Naive thymus-derived CD4-positive, alpha-beta T cell (primary cell): ENCODE measurements at regions of chr3 and their contacts with region 1.

Region 1: DNA sequence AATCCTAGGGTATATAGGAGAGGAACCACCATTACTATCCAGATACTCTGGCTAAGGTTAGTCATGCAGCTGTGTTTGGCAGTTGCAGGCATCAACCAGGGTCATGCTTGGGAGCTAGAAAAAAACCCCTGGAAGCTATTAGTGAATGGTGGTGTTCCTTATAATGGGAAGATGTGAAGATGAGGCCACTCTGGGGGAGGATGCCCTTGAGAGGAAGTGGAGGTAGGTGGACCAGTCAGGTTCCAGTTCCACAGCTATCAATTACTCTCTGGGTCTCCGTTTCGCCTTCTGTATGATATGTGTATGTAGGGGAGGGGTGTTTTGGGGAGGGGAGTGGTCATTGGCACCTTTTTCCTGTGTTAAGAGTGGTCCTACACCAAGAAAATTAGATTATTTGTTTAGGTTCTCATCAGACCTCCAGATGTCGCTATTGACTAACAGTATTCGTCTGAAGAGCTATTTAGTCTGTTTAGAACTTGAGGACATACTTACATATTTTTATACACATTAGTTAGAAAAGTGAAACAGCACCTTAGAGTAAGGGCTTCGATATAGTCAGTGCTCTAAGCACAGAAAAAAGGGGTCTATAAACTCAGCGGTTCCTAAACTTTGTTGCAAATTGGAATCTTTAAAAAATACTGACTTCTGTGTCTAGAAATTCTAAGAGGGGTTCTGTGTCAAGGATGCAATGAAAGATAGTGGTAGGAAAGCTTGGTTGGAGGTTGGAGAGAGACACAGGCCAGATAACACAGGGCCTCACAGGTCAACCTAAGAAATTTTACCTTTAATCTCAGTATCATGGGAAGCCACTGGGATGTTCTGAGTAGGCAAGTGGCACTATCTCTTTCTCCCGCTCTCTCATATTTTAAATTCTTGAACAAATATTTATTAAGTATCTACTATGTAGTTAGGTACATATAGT is 9.1 kb upstream of the HPS3 start:
- DNase-seq: peak in 7 of 9 donors; percentile 37 to 60 (median 49)
- ATAC-seq: peak; percentile 90
- H3K4me3 ChIP-seq: no peak overlapping the region
- H3K4me3 Mint-ChIP-seq: no peak overlapping the region
- H3K27ac ChIP-seq: no peak overlapping the region
- H3K27ac Mint-ChIP-seq: peak overlapping the region in 2 of 9 donors; percentile 3 to 74
- H3K4me1 ChIP-seq: no peaks in the 10 kb centered on the region
- H3K4me1 Mint-ChIP-seq: peaks cover 0 to 7% (median 0%) of the 10 kb centered on the region in 7 donors
- H3K27me3 ChIP-seq: no peaks in the 10 kb centered on the region
- H3K27me3 Mint-ChIP-seq: peaks cover 0 to 12% (median 8%) of the 10 kb centered on the region in 5 donors

Region 2: GRCh38 chr3:148809835-148810234 is 310.5 kb before region 1 on chr3:
- CTCF ChIA-PET with region 1: no interaction called
- POLR2A ChIA-PET with region 1: no interaction called
- intact Hi-C with region 1: no loop called
- DNase-seq: no peak
- ATAC-seq: no peak
- H3K4me3 ChIP-seq: no peak overlapping the region
- H3K4me3 Mint-ChIP-seq: no peak overlapping the region
- H3K27ac ChIP-seq: no peak overlapping the region
- H3K27ac Mint-ChIP-seq: no peak overlapping the region
- H3K4me1 ChIP-seq: no peaks in the 10 kb centered on the region
- H3K4me1 Mint-ChIP-seq: no peaks in the 10 kb centered on the region
- H3K27me3 ChIP-seq: no peaks in the 10 kb centered on the region
- H3K27me3 Mint-ChIP-seq: peaks cover 0 to 26% (median 5%) of the 10 kb centered on the region in 5 donors

Region 3: GRCh38 chr3:148861277-148861869 is 258.9 kb before region 1 on chr3:
- CTCF ChIA-PET with region 1: no interaction called
- POLR2A ChIA-PET with region 1: no interaction called
- intact Hi-C with region 1: loop called in 1 of 2 experiments (anchors 2 kb)
- DNase-seq: peak in 5 of 9 donors; percentile 4 to 35 (median 14)
- ATAC-seq: peak; percentile 72
- H3K4me3 ChIP-seq: no peak overlapping the region
- H3K4me3 Mint-ChIP-seq: no peak overlapping the region
- H3K27ac ChIP-seq: no peak overlapping the region
- H3K27ac Mint-ChIP-seq: no peak overlapping the region
- H3K4me1 ChIP-seq: no peaks in the 10 kb centered on the region
- H3K4me1 Mint-ChIP-seq: no peaks in the 10 kb centered on the region
- H3K27me3 ChIP-seq: peaks cover 0 to 3% of the 10 kb centered on the region in 2 donors
- H3K27me3 Mint-ChIP-seq: peaks cover 4 to 22% (median 13%) of the 10 kb centered on the region in 5 donors

Region 4: DNA sequence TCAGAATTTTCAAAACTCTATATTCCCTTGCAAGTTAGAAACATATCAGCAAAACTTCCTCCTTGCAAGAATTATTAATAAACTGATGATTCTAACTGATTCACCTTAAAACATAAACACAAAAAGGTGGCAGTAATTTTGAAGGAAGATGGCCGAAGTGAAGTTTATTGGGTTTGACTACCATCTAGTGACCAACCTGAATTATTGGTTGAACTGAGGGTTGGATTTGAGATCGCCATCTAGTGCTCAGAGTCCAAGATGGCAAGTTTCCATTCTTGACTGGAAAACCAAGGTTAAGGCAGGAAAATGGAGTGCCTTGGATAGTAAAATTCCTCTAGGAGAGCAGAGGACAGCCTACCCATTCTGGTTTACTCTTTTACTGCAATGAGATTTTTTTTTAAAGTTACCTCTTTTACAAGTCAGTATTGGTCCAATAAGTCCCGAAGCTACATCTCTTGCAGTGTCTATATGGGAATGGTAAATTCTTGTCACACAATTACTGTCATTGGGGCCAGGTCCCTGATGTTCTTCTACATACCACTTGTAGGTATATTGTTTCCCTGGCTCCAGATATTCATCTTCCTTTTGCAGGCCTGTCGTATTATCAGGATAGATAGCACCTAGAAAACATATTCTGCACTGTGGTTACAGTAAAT is 152.9 kb after region 1 on chr3:
- CTCF ChIA-PET with region 1: interaction called, 77 read pairs
- POLR2A ChIA-PET with region 1: interaction called, 4 read pairs
- intact Hi-C with region 1: loop called (anchors 1 kb)
- DNase-seq: peak in 7 of 9 donors; percentile 19 to 67 (median 52)
- ATAC-seq: peak; percentile 92
- H3K4me3 ChIP-seq: no peak overlapping the region
- H3K4me3 Mint-ChIP-seq: no peak overlapping the region
- H3K27ac ChIP-seq: no peak overlapping the region
- H3K27ac Mint-ChIP-seq: no peak overlapping the region
- H3K4me1 ChIP-seq: peaks cover 4 to 13% of the 10 kb centered on the region in 2 donors
- H3K4me1 Mint-ChIP-seq: peaks cover 6 to 14% (median 13%) of the 10 kb centered on the region in 7 donors
- H3K27me3 ChIP-seq: no peaks in the 10 kb centered on the region
- H3K27me3 Mint-ChIP-seq: peaks cover 0 to 15% (median 0%) of the 10 kb centered on the region in 5 donors

Region 5: GRCh38 chr3:149352556-149352955 is 232.2 kb after region 1 on chr3:
- CTCF ChIA-PET with region 1: no interaction called
- POLR2A ChIA-PET with region 1: no interaction called
- intact Hi-C with region 1: loop called in 1 of 2 experiments (anchors 5 kb)
- DNase-seq: peak in 3 of 9 donors; percentile 3 to 28 (median 4)
- ATAC-seq: peak; percentile 83
- H3K4me3 ChIP-seq: no peak overlapping the region
- H3K4me3 Mint-ChIP-seq: no peak overlapping the region
- H3K27ac ChIP-seq: no peak overlapping the region
- H3K27ac Mint-ChIP-seq: no peak overlapping the region
- H3K4me1 ChIP-seq: no peaks in the 10 kb centered on the region
- H3K4me1 Mint-ChIP-seq: no peaks in the 10 kb centered on the region
- H3K27me3 ChIP-seq: no peaks in the 10 kb centered on the region
- H3K27me3 Mint-ChIP-seq: peaks cover 22 to 33% (median 29%) of the 10 kb centered on the region in 5 donors

Region 6: GRCh38 chr3:149717391-149718056 is 597.2 kb after region 1 on chr3:
- CTCF ChIA-PET with region 1: interaction called, 3 read pairs
- POLR2A ChIA-PET with region 1: no interaction called
- intact Hi-C with region 1: loop called in 1 of 2 experiments (anchors 1 kb)
- DNase-seq: peak in 4 of 9 donors; percentile 3 to 12 (median 8)
- ATAC-seq: no peak
- H3K4me3 ChIP-seq: no peak overlapping the region
- H3K4me3 Mint-ChIP-seq: no peak overlapping the region
- H3K27ac ChIP-seq: no peak overlapping the region
- H3K27ac Mint-ChIP-seq: no peak overlapping the region
- H3K4me1 ChIP-seq: no peaks in the 10 kb centered on the region
- H3K4me1 Mint-ChIP-seq: no peaks in the 10 kb centered on the region
- H3K27me3 ChIP-seq: no peaks in the 10 kb centered on the region
- H3K27me3 Mint-ChIP-seq: peaks cover 0 to 13% (median 0%) of the 10 kb centered on the region in 5 donors